Ascending aorta (tissue), 2 donors: ENCODE measurements at regions of chr7 and their contacts with region 1.

Region 1: DNA sequence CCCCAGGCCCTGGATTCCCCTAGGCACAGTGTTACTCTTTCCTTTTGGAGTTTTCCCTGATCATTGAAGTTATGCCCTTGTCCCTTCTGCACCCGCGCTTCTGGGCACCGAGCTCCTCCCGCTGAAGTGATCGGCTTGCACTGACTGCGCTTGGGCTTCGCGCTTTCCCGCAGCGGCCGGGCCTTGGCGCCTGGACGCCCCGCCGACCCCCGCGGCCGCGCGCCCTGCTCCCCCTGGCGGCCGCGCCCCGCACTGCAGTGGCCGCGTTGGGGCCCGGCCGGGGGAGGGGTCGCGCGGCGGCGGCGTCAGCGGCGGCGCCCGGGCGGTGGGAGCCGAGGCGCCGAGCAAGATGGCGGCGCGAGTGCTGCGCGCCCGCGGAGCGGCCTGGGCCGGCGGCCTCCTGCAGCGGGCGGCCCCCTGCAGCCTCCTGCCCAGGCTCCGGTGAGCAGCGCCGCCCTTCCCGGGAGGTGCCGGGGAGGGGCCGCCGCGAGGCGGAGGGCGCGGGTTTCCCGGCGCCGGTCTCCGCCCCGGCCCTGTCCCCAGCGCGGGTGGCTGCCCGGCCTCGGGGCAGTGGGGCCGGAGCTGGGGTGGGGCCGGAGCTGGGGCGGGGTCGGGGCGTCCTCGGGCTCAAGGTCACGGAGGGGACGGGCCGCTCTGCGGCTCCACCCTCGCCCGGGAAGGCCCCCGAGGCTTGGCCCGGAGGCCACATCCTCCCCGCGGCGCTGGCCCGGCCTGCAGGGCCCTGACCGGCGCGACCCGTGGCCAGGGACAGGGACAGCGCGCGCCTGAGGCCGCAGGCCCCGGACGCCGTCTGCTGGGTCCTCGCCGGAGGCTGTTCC is at the start of gene NIPSNAP2:
- DNase-seq: peak; percentile 15 to 86
- H3K4me3 ChIP-seq: peak within 1 kb of the TSS; percentile 90 to 92
- H3K27ac ChIP-seq: peak within 1 kb of the TSS; percentile 88 to 99
- H3K4me1 ChIP-seq: peaks cover 4 to 13% of the 10 kb centered on the region in 2 donors
- H3K27me3 ChIP-seq: no peaks in the 10 kb centered on the region
- CTCF ChIP-seq: peak in 1 of 3 experiments; percentile 83
- total RNA-seq, gene NIPSNAP2: 33.3 TPM

Region 2: DNA sequence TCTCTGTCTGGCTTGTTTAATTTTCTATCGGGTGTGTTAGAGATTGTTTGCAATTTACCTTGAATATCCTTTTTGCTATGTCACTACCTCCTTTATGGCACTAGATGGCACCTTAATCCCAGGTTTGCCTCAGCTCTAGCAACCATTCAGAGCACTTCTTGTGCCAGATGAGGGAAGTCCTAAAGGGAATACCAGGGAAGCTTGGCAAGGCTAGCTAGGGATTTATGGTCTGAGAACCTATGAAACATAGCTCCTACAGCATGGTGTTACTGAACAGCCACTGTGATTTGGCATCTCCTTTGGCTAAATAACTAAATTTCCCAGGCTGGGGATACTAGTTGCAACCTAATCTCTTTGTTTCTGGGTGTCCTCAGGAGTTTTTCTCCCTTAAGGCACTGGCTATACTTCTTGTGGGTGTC is 323.2 kb before region 1 on chr7:
- intact Hi-C with region 1: loop called (anchors 1 kb)
- DNase-seq: no peak
- H3K4me3 ChIP-seq: no peak overlapping the region
- H3K27ac ChIP-seq: no peak overlapping the region
- H3K4me1 ChIP-seq: no peaks in the 10 kb centered on the region
- H3K27me3 ChIP-seq: no peaks in the 10 kb centered on the region
- CTCF ChIP-seq: peak; percentile 44 to 67 (median 59)

Region 3: GRCh38 chr7:55887821-55888247 is 76.6 kb before region 1 on chr7:
- intact Hi-C with region 1: loop called (anchors 1 kb)
- DNase-seq: no peak
- H3K4me3 ChIP-seq: peak overlapping the region; percentile 59 to 75
- H3K27ac ChIP-seq: peak overlapping the region in 1 of 2 donors; percentile 65
- H3K4me1 ChIP-seq: peaks cover 0 to 8% of the 10 kb centered on the region in 2 donors
- H3K27me3 ChIP-seq: no peaks in the 10 kb centered on the region
- CTCF ChIP-seq: no peak

Region 4: GRCh38 chr7:55951637-55952351 is 12.7 kb before region 1 on chr7 and contains the start of gene MRPS17:
- intact Hi-C with region 1: loop called (anchors 1 kb)
- DNase-seq: peak; percentile 69 to 93
- H3K4me3 ChIP-seq: peak within 1 kb of the TSS; percentile 88 to 99
- H3K27ac ChIP-seq: peak within 1 kb of the TSS; percentile 85 to 90
- H3K4me1 ChIP-seq: peaks cover 0 to 5% of the 10 kb centered on the region in 2 donors
- H3K27me3 ChIP-seq: no peaks in the 10 kb centered on the region
- CTCF ChIP-seq: no peak
- total RNA-seq, gene MRPS17: 0.43 TPM

Region 5: DNA sequence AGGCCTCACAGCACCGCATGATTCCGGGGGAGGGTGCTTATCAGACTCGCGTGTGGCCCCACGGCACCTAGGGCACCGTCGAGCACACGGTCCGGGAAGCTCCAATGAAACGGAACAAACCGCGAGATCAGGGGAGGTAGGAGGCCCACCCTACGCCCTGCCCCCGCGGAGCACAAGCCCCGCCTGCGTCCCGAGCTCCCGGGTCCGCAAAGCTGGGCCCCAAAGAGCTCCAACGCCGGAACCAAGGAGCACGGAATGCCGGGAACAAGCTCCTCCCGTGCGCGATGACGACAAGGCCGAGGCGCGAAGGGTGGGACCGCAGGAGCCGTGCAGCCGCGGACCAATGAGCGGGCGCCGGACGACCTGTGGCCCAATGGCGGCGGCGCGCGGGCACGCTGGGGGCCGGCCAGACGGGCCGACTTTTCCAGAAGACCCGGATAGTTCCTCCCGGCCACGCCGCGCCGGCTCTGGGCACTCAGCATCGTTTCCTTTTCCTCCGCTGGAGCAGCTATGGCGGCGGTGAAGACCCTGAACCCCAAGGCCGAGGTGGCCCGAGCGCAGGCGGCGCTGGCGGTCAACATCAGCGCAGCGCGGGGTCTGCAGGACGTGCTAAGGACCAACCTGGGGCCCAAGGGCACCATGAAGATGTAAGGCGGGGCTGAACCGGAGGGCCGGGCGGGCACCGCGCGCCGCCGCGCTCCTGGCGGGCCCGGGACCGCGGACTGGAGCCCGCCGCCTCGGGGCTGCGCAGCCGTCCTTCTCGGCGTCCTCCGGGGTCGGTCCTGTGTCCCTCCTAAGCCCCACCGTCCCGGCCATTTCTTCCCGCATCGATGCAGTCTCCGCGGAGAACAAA is 87.1 kb after region 1 on chr7 and contains the starts of genes CCT6A and PSPH:
- intact Hi-C with region 1: loop called (anchors 2 kb)
- DNase-seq: peak; percentile 87 to 99
- H3K4me3 ChIP-seq: peak within 1 kb of the TSS; percentile 94
- H3K27ac ChIP-seq: peak within 1 kb of the TSS; percentile 92 to 95
- H3K4me1 ChIP-seq: peaks cover 0 to 26% of the 10 kb centered on the region in 2 donors
- H3K27me3 ChIP-seq: no peaks in the 10 kb centered on the region
- CTCF ChIP-seq: no peak
- total RNA-seq, gene CCT6A: 86.2 TPM
- total RNA-seq, gene PSPH: not detected

Region 6: DNA sequence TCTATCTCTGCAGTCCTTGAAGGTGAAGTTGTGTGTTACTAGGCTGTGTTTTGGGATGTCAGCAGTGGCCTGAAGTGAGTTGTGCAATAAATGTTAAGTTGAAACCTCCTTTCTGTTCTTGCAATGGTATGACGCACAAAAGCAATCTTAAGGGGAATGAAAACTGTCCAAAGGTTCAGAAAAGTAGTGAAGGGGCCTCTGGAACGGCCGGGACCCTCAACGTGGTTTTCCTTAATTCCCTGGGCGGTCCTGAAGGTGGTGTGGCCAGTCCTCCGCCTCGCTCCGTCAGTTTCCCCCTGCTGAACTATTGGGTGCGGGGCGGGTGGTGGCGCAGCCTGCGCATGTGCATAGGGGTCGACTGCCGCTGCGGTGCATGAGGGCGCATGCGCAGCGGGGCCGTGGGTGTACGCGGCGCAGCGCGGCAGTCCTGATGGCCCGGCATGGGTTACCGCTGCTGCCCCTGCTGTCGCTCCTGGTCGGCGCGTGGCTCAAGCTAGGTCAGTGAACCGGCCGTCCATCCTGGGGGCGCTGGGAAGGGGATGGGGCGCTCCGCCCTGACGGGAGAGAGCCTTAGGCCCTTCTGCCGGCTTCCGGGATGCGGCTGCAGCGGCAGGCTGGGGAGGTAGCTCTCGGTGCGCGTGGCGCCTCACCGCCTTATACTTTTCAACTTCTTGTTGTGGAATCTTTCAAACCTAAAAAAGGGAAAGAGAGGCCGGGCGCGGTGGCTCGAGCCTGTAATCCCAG is 99.6 kb after region 1 on chr7 and contains the start of gene SUMF2:
- intact Hi-C with region 1: loop called (anchors 2 kb)
- DNase-seq: peak; percentile 67 to 95
- H3K4me3 ChIP-seq: peak within 1 kb of the TSS; percentile 80 to 98
- H3K27ac ChIP-seq: peak within 1 kb of the TSS; percentile 93
- H3K4me1 ChIP-seq: peaks cover 0 to 7% of the 10 kb centered on the region in 2 donors
- H3K27me3 ChIP-seq: no peaks in the 10 kb centered on the region
- CTCF ChIP-seq: peak in 1 of 3 experiments; percentile 33
- total RNA-seq, gene SUMF2: 74.6 TPM

Region 7: GRCh38 chr7:56074371-56074791 is 109.9 kb after region 1 on chr7:
- intact Hi-C with region 1: loop called (anchors 2 kb)
- DNase-seq: peak; percentile 49 to 95
- H3K4me3 ChIP-seq: no peak overlapping the region
- H3K27ac ChIP-seq: peak overlapping the region; percentile 49 to 67
- H3K4me1 ChIP-seq: peaks cover 3 to 10% of the 10 kb centered on the region in 2 donors
- H3K27me3 ChIP-seq: no peaks in the 10 kb centered on the region
- CTCF ChIP-seq: peak; percentile 84 to 92 (median 85)